ENCODE measurements at regions of chr6 and their contacts with region 1.

Region 1: GRCh38 chr6:152054441-152054840 is 247.0 kb downstream of the ESR1 start:
- DNase-seq: peak; percentile 21
- ATAC-seq: peak; percentile 72
- H3K4me3 ChIP-seq: no peak overlapping the region
- H3K27ac ChIP-seq: no peak overlapping the region
- H3K4me1 ChIP-seq: peaks cover 0 to 14% of the 10 kb centered on the region in 2 experiments; a peak in 2 of 4 replicates
- H3K27me3 ChIP-seq: no peaks in the 10 kb centered on the region
- CTCF ChIP-seq: no peak
- POLR2A ChIP-seq: no peak
- RAD21 ChIP-seq: no peak; the same call in 1 of the 2 replicates

Region 2: GRCh38 chr6:151805286-151805840 is 249.1 kb before region 1 on chr6:
- CTCF ChIA-PET with region 1: no interaction called
- POLR2A ChIA-PET with region 1: no interaction called
- RAD21 ChIA-PET with region 1: no interaction called
- intact Hi-C with region 1: no loop called
- DNase-seq: no peak
- ATAC-seq: peak; percentile 58
- H3K4me3 ChIP-seq: no peak overlapping the region
- H3K27ac ChIP-seq: no peak overlapping the region
- H3K4me1 ChIP-seq: no peaks in the 10 kb centered on the region
- H3K27me3 ChIP-seq: peaks cover 18% of the 10 kb centered on the region
- CTCF ChIP-seq: no peak
- POLR2A ChIP-seq: no peak
- RAD21 ChIP-seq: no peak

Region 3: DNA sequence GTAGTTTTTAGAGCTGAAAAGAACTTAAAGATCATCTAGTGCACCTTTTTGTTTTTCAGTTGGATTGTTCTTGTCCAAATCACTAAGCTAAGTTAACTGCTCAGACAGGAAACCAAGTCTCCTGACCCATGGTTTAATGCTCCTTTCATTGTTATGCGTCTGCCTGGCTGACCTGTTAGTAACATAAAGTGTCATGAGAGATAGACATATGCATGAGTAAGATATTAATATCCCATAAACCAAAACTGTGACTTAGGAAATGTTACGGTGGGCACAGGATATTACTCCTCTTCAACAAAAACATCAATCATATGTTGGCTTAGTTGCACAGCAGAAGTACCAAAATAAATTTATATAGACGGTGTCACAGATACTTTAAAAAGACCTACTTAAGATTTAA is 162.9 kb before region 1 on chr6:
- CTCF ChIA-PET with region 1: no interaction called
- POLR2A ChIA-PET with region 1: no interaction called
- RAD21 ChIA-PET with region 1: no interaction called
- intact Hi-C with region 1: loop called (anchors 5 kb)
- DNase-seq: no peak
- ATAC-seq: no peak
- H3K4me3 ChIP-seq: no peak overlapping the region
- H3K27ac ChIP-seq: no peak overlapping the region
- H3K4me1 ChIP-seq: no peaks in the 10 kb centered on the region
- H3K27me3 ChIP-seq: no peaks in the 10 kb centered on the region
- CTCF ChIP-seq: no peak
- POLR2A ChIP-seq: no peak
- RAD21 ChIP-seq: no peak